ENCODE measurements at regions of chr7 and their contacts with region 1.

Region 1: GRCh38 chr7:42856607-42856994 is 55.3 kb downstream of the C7orf25 start:
- DNase-seq: peak; percentile 26
- H3K4me3 ChIP-seq: peak overlapping the region; percentile 41 to 73 (median 69)
- H3K27ac ChIP-seq: no peak overlapping the region
- H3K4me1 ChIP-seq: peaks cover 10% of the 10 kb centered on the region
- H3K27me3 ChIP-seq: peaks cover 5 to 9% of the 10 kb centered on the region in 2 experiments
- CTCF ChIP-seq: no peak
- POLR2A ChIP-seq: no peak

Region 2: GRCh38 chr7:42876182-42877068 is 19.8 kb after region 1 on chr7:
- CTCF ChIA-PET with region 1: interaction called, 13 read pairs
- POLR2A ChIA-PET with region 1: no interaction called
- dilution Hi-C with region 1: no loop called
- intact Hi-C with region 1: no loop called
- DNase-seq: peak; percentile 67
- H3K4me3 ChIP-seq: no peak overlapping the region
- H3K27ac ChIP-seq: no peak overlapping the region
- H3K4me1 ChIP-seq: no peaks in the 10 kb centered on the region
- H3K27me3 ChIP-seq: peaks cover 3 to 6% of the 10 kb centered on the region in 2 experiments
- CTCF ChIP-seq: peak; percentile 60 to 68
- POLR2A ChIP-seq: no peak

Region 3: GRCh38 chr7:42993038-42993437 is 136.4 kb after region 1 on chr7:
- CTCF ChIA-PET with region 1: no interaction called
- POLR2A ChIA-PET with region 1: no interaction called
- dilution Hi-C with region 1: no loop called
- intact Hi-C with region 1: no loop called
- DNase-seq: no peak
- H3K4me3 ChIP-seq: no peak overlapping the region
- H3K27ac ChIP-seq: no peak overlapping the region
- H3K4me1 ChIP-seq: no peaks in the 10 kb centered on the region
- H3K27me3 ChIP-seq: peaks cover 4 to 7% of the 10 kb centered on the region in 2 experiments
- CTCF ChIP-seq: no peak
- POLR2A ChIP-seq: no peak